GM12878 (cell line): ENCODE measurements at regions of chr15 and their contacts with region 1.

Region 1: GRCh38 chr15:36529296-36530011 is 50.0 kb upstream of the CDIN1 start:
- DNase-seq: peak; percentile 31
- ATAC-seq: peak; percentile 95
- H3K4me3 ChIP-seq: no peak overlapping the region
- H3K27ac ChIP-seq: no peak overlapping the region; the same call in 1 of the 2 replicates
- H3K4me1 ChIP-seq: no peaks in the 10 kb centered on the region
- H3K27me3 ChIP-seq: no peaks in the 10 kb centered on the region
- CTCF ChIP-seq: no peak
- EP300 ChIP-seq: peak; percentile 10 to 75; a peak in 3 of 4 replicates
- POLR2A ChIP-seq: no peak
- RAD21 ChIP-seq: no peak

Region 2: GRCh38 chr15:36133742-36134141 is 395.7 kb before region 1 on chr15:
- CTCF ChIA-PET with region 1: no interaction called
- POLR2A ChIA-PET with region 1: no interaction called
- RAD21 ChIA-PET with region 1: no interaction called
- SMC1A ChIA-PET with region 1: no interaction called
- in situ Hi-C with region 1: no loop called
- intact Hi-C with region 1: no loop called
- DNase-seq: no peak
- ATAC-seq: no peak
- H3K4me3 ChIP-seq: no peak overlapping the region
- H3K27ac ChIP-seq: no peak overlapping the region
- H3K4me1 ChIP-seq: no peaks in the 10 kb centered on the region
- H3K27me3 ChIP-seq: no peaks in the 10 kb centered on the region
- CTCF ChIP-seq: no peak
- EP300 ChIP-seq: no peak
- POLR2A ChIP-seq: no peak
- RAD21 ChIP-seq: no peak

Region 3: GRCh38 chr15:36544518-36545466 is 15.3 kb after region 1 on chr15:
- CTCF ChIA-PET with region 1: interaction called, 11 read pairs
- POLR2A ChIA-PET with region 1: no interaction called
- RAD21 ChIA-PET with region 1: no interaction called
- SMC1A ChIA-PET with region 1: interaction called, 3 read pairs
- in situ Hi-C with region 1: no loop called
- intact Hi-C with region 1: no loop called
- DNase-seq: no peak
- ATAC-seq: no peak
- H3K4me3 ChIP-seq: no peak overlapping the region
- H3K27ac ChIP-seq: no peak overlapping the region
- H3K4me1 ChIP-seq: no peaks in the 10 kb centered on the region
- H3K27me3 ChIP-seq: no peaks in the 10 kb centered on the region
- CTCF ChIP-seq: no peak
- EP300 ChIP-seq: no peak
- POLR2A ChIP-seq: no peak
- RAD21 ChIP-seq: no peak